CD14-positive monocyte (primary cell): ENCODE measurements at regions of chrX and their contacts with region 1.

Region 1: DNA sequence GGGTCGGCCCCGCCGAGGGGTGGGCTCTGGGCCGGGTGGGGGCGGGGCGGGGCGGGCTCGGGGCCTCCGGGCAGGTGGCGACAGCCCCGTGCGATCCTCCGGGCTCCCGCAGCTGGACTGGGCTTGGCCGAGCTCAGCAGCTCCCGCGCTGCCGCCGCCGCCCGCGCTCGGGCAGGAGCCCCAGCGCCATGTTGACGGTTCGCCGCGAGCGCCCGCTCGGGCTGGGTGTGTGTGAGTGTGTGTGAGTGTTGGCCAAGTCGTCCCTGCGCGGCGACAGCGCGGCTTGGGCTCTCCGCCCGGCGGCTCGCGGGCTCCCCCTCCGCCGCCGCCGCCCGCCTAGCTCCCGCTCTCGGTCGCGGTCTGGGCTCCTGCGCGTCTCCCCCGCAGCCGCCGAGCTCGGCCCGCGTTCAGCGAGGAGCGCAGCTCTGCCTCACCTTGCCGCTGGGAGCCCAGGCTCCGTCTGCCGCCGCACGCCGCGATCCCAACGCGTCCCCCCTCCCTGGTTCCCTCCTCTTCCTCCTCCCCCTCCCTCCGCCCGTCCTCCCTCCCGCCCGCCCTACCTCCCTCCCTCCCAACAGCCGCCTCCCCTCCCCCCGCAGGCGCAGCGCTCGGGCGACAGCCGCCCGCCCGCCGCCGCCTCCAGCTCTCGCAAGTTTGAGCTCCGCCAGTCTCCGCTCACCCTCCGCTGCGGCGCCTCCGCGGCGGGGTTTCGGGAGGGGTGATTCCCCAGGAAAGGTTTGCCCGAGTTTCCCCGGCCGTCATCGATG is at the start of gene BCOR:
- DNase-seq: peak in 2 of 3 donors; percentile 32 to 57
- H3K4me3 ChIP-seq: peak within 1 kb of the TSS; percentile 63 to 77 (median 70)
- H3K4me3 Mint-ChIP-seq: peak within 1 kb of the TSS; percentile 84 to 94
- H3K27ac ChIP-seq: peak within 1 kb of the TSS; percentile 65 to 79
- H3K27ac Mint-ChIP-seq: peak within 1 kb of the TSS in 6 of 7 donors; percentile 20 to 75 (median 58)
- H3K4me1 ChIP-seq: peaks cover 46 to 49% of the 10 kb centered on the region in 2 donors
- H3K4me1 Mint-ChIP-seq: peaks cover 40% of the 10 kb centered on the region
- H3K27me3 ChIP-seq: peaks cover 2 to 17% of the 10 kb centered on the region in 2 donors
- H3K27me3 Mint-ChIP-seq: peaks cover 1 to 70% (median 14%) of the 10 kb centered on the region in 3 donors
- CTCF ChIP-seq: no peak
- polyA plus RNA-seq, gene BCOR: 1.1 to 8.2 (median 2.6) TPM

Region 2: GRCh38 chrX:40146262-40147125 is 48.8 kb after region 1 on chrX:
- intact Hi-C with region 1: loop called in 1 of 2 experiments (anchors 5 kb)
- DNase-seq: peak in 2 of 3 donors; percentile 50 to 55
- H3K4me3 ChIP-seq: peak overlapping the region; percentile 28 to 70 (median 36)
- H3K4me3 Mint-ChIP-seq: peak overlapping the region; percentile 62 to 75
- H3K27ac ChIP-seq: no peak overlapping the region
- H3K27ac Mint-ChIP-seq: no peak overlapping the region
- H3K4me1 ChIP-seq: peaks cover 71 to 76% of the 10 kb centered on the region in 2 donors
- H3K4me1 Mint-ChIP-seq: peaks cover 67% of the 10 kb centered on the region
- H3K27me3 ChIP-seq: peaks cover 2 to 10% of the 10 kb centered on the region in 2 donors
- H3K27me3 Mint-ChIP-seq: peaks cover 12 to 83% (median 32%) of the 10 kb centered on the region in 3 donors
- CTCF ChIP-seq: no peak

Region 3: DNA sequence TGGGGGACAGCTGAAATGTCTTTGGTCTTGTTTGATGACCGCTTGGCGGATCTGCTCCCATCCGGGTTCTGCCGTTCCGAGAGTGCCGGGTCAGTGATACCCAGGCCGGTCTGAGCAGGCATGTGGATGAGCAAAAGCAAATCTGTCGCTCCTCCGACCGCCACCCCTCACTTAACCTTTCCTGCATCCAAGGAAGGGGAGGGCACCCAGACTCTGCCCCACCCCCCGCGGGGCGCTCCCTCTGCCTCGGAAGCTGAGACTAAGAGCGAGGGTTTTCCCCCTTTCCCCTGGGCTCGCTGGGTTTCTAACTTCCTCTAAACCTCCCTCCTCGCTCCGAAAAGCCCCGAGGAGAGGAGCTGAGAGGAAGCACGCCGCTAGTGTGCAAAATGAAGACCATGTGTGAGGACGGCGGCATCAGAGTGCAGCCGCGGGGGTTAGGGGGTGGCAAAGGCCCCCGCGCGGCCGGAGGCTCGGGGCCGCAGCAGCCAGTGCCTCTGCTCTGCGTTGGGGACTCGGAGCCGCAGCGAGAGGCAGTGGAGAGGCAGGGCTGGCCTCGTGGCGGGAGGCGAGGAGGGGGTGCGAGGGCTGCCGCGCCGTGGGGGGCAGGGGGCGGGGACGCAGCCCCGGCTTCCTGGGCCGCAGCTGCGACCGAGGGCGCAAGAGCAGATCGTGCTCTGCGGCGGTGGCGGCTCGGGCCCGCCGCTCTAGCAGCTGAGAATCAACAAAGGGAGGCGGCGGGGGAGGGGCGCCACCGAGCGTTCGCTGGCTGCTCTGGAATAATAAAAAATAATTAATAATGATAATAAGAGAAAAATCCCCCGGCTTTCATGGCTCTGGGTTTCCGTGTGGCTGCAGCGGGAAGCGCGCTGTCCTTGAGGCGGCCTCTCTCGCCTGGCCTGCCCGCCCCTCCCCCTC is 55.9 kb after region 1 on chrX:
- intact Hi-C with region 1: loop called (anchors 5 kb)
- DNase-seq: peak; percentile 69 to 81 (median 72)
- H3K4me3 ChIP-seq: peak overlapping the region; percentile 15 to 77 (median 49)
- H3K4me3 Mint-ChIP-seq: peak overlapping the region; percentile 78 to 83
- H3K27ac ChIP-seq: peak overlapping the region; percentile 17 to 50
- H3K27ac Mint-ChIP-seq: peak overlapping the region in 6 of 7 donors; percentile 42 to 82 (median 70)
- H3K4me1 ChIP-seq: peaks cover 70 to 95% of the 10 kb centered on the region in 2 donors
- H3K4me1 Mint-ChIP-seq: peaks cover 48% of the 10 kb centered on the region
- H3K27me3 ChIP-seq: peaks cover 0 to 10% of the 10 kb centered on the region in 2 donors
- H3K27me3 Mint-ChIP-seq: peaks cover 0 to 75% (median 6%) of the 10 kb centered on the region in 3 donors
- CTCF ChIP-seq: no peak